Sigmoid colon (tissue), 7 donors: ENCODE measurements at regions of chr6 and their contacts with region 1.

Region 1: DNA sequence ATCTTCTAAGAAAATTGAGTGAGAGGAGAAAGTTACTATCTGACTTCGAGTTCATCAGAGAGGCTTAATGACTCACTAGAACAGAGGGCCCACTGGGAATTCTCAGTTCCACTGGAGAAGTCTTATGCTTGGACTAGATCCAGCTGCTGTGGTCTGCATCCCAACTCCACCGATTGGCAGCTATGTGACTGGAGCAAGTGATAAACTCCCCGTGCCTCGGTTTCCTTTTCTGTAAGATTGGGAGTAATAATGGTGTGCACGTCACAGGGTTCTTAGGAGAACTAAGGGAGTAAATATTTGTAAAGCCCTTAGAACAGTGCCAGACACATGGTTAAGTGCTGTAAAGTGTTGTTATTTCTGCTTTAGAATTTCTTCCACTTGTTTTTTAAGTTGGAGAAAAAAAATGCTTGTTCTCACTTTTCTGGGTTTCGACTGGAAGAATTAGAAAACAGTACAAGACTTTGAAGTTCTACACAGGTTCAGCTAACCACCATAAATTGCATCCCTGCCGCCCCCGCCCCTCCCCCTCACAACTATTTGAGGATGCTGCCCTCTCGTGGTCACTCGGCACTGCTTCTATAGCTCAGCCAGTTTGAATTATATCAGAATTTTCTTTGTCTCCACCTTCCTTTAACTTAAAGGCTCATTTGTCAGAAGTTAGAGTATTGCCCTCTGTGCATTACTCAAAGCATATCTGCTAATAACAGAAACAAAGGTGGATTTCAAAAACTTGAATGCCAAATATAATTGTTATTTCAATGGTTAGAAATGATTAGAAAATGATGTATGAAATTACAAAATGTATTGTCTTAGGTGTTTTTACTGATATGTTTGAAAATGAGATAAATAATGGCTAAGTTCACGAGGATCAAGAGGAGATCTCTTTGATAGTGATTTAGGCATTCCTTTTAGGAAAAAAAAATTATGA is 95.0 kb upstream of the IFNGR1 start:
- DNase-seq: peak; percentile 83
- H3K4me3 ChIP-seq: peak overlapping the region in 1 of 4 donors; percentile 13
- H3K27ac ChIP-seq: no peak overlapping the region
- H3K4me1 ChIP-seq: peaks cover 0 to 8% (median 2%) of the 10 kb centered on the region in 4 donors
- H3K27me3 ChIP-seq: no peaks in the 10 kb centered on the region
- CTCF ChIP-seq: peak; percentile 38 to 83 (median 70)
- EP300 ChIP-seq: no peak
- POLR2A ChIP-seq: no peak

Region 2: GRCh38 chr6:136822376-136823127 is 491.6 kb before region 1 on chr6 and contains the start of gene PEX7:
- intact Hi-C with region 1: loop called (anchors 10 kb)
- DNase-seq: peak; percentile 96
- H3K4me3 ChIP-seq: peak within 1 kb of the TSS; percentile 49 to 82 (median 74)
- H3K27ac ChIP-seq: peak within 1 kb of the TSS; percentile 91 to 95 (median 93)
- H3K4me1 ChIP-seq: peaks cover 0 to 13% (median 6%) of the 10 kb centered on the region in 4 donors
- H3K27me3 ChIP-seq: no peaks in the 10 kb centered on the region
- CTCF ChIP-seq: peak; percentile 37 to 62 (median 42)
- EP300 ChIP-seq: no peak
- POLR2A ChIP-seq: no peak
- total RNA-seq, gene PEX7: 2.9 to 7.1 (median 5.5) TPM

Region 3: GRCh38 chr6:137094411-137095008 is 219.7 kb before region 1 on chr6:
- intact Hi-C with region 1: loop called (anchors 5 kb)
- DNase-seq: peak; percentile 75
- H3K4me3 ChIP-seq: no peak overlapping the region
- H3K27ac ChIP-seq: no peak overlapping the region
- H3K4me1 ChIP-seq: no peaks in the 10 kb centered on the region
- H3K27me3 ChIP-seq: no peaks in the 10 kb centered on the region
- CTCF ChIP-seq: peak; percentile 30 to 72 (median 50)
- EP300 ChIP-seq: no peak
- POLR2A ChIP-seq: no peak